Caco-2 (cell line): ENCODE measurements at regions of chr7 and their contacts with region 1.

Region 1: GRCh38 chr7:141785706-141786552 is 4.1 kb upstream of the TAS2R5 start:
- DNase-seq: peak; percentile 37 to 41
- H3K4me3 ChIP-seq: no peak overlapping the region
- H3K4me3 Mint-ChIP-seq: no peak overlapping the region
- H3K27ac Mint-ChIP-seq: no peak overlapping the region
- H3K4me1 ChIP-seq: no peaks in the 10 kb centered on the region
- H3K4me1 Mint-ChIP-seq: no peaks in the 10 kb centered on the region
- H3K27me3 ChIP-seq: no peaks in the 10 kb centered on the region
- H3K27me3 Mint-ChIP-seq: no peaks in the 10 kb centered on the region
- CTCF ChIP-seq: peak; percentile 74 to 86

Region 2: DNA sequence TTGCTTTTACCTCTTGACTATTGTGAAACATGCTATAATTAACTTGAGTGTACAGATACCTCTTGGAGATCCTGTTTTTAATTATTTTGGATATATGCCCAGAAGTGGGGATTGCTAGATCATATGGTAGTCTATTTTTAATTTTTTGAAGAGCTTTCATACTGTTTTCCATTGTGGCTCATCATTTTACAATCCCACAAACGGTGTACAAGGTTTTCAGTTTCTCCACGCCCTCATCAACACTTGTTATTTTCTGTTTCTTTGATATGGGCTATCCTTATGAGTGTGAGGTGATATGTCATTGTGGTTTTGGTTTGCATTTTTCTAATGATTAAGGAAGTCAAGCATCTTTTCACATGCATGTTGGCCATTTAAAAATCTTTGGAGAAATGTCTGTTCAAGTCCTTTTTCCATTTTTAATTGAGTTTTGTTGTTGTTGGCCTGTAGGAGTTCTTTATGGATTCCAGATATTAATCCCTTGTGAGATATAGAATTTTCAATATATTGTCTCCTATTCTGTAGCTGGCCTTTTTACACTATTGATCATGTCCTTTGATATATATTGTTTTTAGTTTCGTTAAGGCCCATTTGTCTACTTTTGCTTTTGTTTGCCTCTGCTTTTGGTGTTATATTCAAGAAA is 227.3 kb before region 1 on chr7:
- CTCF ChIA-PET with region 1: no interaction called
- POLR2A ChIA-PET with region 1: no interaction called
- intact Hi-C with region 1: no loop called
- DNase-seq: no peak
- H3K4me3 ChIP-seq: no peak overlapping the region
- H3K4me3 Mint-ChIP-seq: no peak overlapping the region
- H3K27ac Mint-ChIP-seq: no peak overlapping the region
- H3K4me1 ChIP-seq: no peaks in the 10 kb centered on the region
- H3K4me1 Mint-ChIP-seq: no peaks in the 10 kb centered on the region
- H3K27me3 ChIP-seq: no peaks in the 10 kb centered on the region
- H3K27me3 Mint-ChIP-seq: no peaks in the 10 kb centered on the region
- CTCF ChIP-seq: no peak

Region 3: DNA sequence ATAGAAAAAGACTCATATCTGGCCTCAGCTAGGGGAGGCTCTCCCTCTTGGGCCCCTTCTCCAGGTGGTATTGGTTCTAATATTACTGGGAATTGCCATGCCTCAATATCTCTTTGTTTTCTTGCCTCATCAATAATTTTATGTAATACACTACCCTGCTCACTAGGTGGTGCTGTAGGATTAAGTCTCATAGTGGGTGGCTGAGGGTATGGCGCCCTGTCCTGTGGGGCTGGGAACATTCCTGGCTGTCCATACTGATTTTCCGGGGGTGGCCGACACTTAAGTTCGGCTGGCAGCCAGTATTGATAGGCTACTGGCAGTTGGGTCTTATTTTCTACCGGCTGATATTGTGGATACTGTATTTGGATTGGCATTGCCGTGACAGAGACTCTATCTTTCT is 31.0 kb before region 1 on chr7:
- CTCF ChIA-PET with region 1: no interaction called
- POLR2A ChIA-PET with region 1: no interaction called
- intact Hi-C with region 1: loop called (anchors 1 kb)
- DNase-seq: peak in 1 of 2 experiments; percentile 58
- H3K4me3 ChIP-seq: no peak overlapping the region
- H3K4me3 Mint-ChIP-seq: no peak overlapping the region
- H3K27ac Mint-ChIP-seq: no peak overlapping the region
- H3K4me1 ChIP-seq: no peaks in the 10 kb centered on the region
- H3K4me1 Mint-ChIP-seq: no peaks in the 10 kb centered on the region
- H3K27me3 ChIP-seq: no peaks in the 10 kb centered on the region
- H3K27me3 Mint-ChIP-seq: no peaks in the 10 kb centered on the region
- CTCF ChIP-seq: peak; percentile 45 to 68